H1 (cell line): ENCODE measurements at regions of chr6 and their contacts with region 1.

Region 1: DNA sequence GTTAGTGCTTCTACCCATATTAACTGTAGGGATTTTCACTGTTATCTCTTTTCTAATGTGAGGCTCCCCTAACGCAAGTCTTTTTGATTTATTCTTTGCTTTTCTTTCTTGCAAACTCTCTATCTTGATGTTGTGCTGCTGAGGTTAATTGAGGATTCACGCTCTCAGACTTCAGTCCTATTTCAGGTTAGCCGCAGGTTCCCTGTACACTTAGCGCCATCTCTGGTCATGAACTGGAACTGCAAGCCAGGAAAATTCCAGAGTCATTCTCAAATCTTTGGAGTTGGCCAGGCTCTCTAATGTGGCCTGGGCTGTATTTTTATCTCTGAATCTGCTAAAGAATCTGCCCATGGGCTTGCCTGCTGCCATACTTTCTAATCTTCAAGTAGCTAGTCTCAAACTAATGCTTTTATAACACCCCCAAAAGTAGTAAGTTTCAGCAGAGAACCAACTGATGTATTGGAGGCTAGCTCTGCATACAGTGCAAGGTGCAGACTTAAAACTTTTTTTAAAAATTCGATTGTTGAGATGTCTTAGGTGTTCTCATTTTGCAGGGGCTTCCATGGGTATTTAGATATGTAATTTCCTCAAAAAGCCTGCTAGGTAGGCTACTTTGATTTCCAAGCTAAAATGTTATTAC is 91.1 kb upstream of the OPRM1 start:
- DNase-seq: peak; percentile 27 to 69
- H3K4me3 ChIP-seq: no peak overlapping the region
- H3K27ac ChIP-seq: no peak overlapping the region
- H3K4me1 ChIP-seq: peaks cover 0 to 4% (median 4%) of the 10 kb centered on the region in 4 experiments; a peak in 3 of 7 replicates
- H3K27me3 ChIP-seq: no peaks in the 10 kb centered on the region
- CTCF ChIP-seq: peak; percentile 66 to 96 (median 68)
- EP300 ChIP-seq: no peak
- POLR2A ChIP-seq: no peak
- RAD21 ChIP-seq: peak; percentile 90 to 93

Region 2: GRCh38 chr6:153927867-153928266 is 20.1 kb before region 1 on chr6:
- CTCF ChIA-PET with region 1: interaction called, 11 read pairs
- POLR2A ChIA-PET with region 1: no interaction called
- DNase-seq: no peak
- H3K4me3 ChIP-seq: no peak overlapping the region
- H3K27ac ChIP-seq: no peak overlapping the region
- H3K4me1 ChIP-seq: no peaks in the 10 kb centered on the region
- H3K27me3 ChIP-seq: no peaks in the 10 kb centered on the region
- CTCF ChIP-seq: no peak
- EP300 ChIP-seq: no peak
- POLR2A ChIP-seq: no peak
- RAD21 ChIP-seq: no peak